Caco-2 (cell line): ENCODE measurements at regions of chrX and their contacts with region 1.

Region 1: DNA sequence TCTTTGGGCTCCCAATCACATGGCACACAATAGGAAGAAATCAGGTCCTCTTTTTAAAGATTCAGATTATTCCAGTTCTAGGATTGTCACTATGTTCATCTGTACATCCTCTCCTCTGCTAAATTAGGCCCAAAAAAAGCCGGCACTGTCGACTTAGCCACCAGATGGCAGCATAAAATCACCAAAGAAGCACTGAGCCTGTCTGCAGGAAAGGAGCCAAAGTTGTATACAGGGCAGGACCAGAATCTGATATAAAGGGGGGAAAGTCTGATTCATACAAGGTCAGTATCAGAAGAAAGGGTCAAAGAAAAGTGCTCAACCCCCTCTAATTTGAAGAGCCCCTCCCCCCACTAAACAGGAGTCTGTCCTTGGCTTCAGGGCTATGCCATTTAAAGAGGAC is 292.5 kb downstream of the CHIC1 start:
- DNase-seq: peak; percentile 43 to 64
- H3K4me3 ChIP-seq: no peak overlapping the region
- H3K4me3 Mint-ChIP-seq: no peak overlapping the region
- H3K27ac Mint-ChIP-seq: no peak overlapping the region
- H3K4me1 ChIP-seq: no peaks in the 10 kb centered on the region
- H3K4me1 Mint-ChIP-seq: no peaks in the 10 kb centered on the region
- H3K27me3 ChIP-seq: no peaks in the 10 kb centered on the region
- H3K27me3 Mint-ChIP-seq: no peaks in the 10 kb centered on the region
- CTCF ChIP-seq: peak; percentile 54 to 56

Region 2: DNA sequence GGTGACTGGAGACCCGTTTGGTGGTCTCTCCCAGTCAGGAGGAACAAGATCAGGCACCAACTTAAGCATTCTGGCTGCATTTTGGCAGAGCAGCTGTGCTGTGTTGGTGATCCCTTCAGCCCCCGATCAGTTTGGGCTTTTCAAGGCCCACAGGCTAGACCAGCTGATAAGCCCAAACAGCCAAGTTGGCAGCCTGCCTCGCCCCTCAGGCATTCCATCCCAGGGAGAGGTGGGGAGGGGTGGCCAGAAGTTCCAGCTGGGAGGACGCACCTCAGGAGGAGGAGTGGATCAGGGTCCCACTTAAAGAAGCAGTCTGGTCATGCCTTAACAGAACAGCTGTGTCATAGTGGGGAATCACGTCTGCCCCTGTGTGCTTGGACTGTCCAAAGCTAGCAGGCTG is 186.8 kb before region 1 on chrX:
- CTCF ChIA-PET with region 1: no interaction called
- POLR2A ChIA-PET with region 1: no interaction called
- intact Hi-C with region 1: no loop called
- DNase-seq: no peak
- H3K4me3 ChIP-seq: no peak overlapping the region
- H3K4me3 Mint-ChIP-seq: no peak overlapping the region
- H3K27ac Mint-ChIP-seq: no peak overlapping the region
- H3K4me1 ChIP-seq: no peaks in the 10 kb centered on the region
- H3K4me1 Mint-ChIP-seq: no peaks in the 10 kb centered on the region
- H3K27me3 ChIP-seq: no peaks in the 10 kb centered on the region
- H3K27me3 Mint-ChIP-seq: no peaks in the 10 kb centered on the region
- CTCF ChIP-seq: no peak

Region 3: GRCh38 chrX:73817393-73818199 is 38.0 kb before region 1 on chrX:
- CTCF ChIA-PET with region 1: no interaction called
- POLR2A ChIA-PET with region 1: no interaction called
- intact Hi-C with region 1: no loop called
- DNase-seq: no peak
- H3K4me3 ChIP-seq: no peak overlapping the region
- H3K4me3 Mint-ChIP-seq: no peak overlapping the region
- H3K27ac Mint-ChIP-seq: no peak overlapping the region
- H3K4me1 ChIP-seq: no peaks in the 10 kb centered on the region
- H3K4me1 Mint-ChIP-seq: no peaks in the 10 kb centered on the region
- H3K27me3 ChIP-seq: no peaks in the 10 kb centered on the region
- H3K27me3 Mint-ChIP-seq: no peaks in the 10 kb centered on the region
- CTCF ChIP-seq: no peak

Region 4: DNA sequence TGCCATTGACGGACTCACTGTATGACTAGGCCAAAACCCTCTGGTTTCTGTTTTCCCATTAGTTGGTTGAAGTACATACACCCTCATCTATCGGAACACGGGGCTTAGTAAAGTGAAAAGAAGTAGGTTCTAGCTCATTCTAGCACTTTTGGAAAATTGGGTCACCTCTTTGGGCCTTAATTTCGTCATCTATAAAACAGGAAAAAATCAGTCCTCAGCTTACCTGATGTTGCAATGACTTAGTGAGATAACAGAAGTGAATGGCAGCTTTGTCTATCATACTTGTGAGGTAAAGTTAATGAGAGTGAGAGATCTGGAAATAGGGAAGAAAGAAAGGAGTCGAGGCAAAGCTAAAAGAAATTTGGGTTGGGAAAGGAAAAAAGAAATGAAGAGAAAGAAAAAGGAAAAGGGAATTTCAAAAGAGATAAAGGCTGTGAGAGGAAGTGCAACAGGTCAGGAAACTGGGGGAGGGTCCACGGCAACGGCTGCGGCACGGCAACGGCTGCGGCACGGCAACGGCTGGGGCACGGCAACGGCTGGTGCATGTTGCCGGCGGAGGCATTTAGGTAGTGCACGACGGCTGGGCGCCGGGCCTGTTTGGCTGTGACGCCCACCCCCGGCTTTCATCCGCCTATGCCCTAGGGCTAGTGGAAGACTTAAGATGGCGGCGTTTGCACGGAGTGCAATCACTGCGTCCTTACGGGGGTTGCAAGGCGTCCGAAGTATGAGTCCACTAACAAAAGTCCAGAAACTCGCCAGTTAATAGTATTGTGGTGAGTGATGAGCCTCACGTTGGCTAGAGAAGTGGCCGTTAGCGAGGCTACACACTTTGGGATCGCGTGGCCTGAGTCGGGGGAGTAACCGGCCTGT is 88.4 kb after region 1 on chrX:
- CTCF ChIA-PET with region 1: no interaction called
- POLR2A ChIA-PET with region 1: no interaction called
- intact Hi-C with region 1: loop called (anchors 5 kb)
- DNase-seq: peak; percentile 83 to 89
- H3K4me3 ChIP-seq: peak overlapping the region; percentile 63
- H3K4me3 Mint-ChIP-seq: peak overlapping the region; percentile 86
- H3K27ac Mint-ChIP-seq: peak overlapping the region; percentile 97
- H3K4me1 ChIP-seq: 0 out of 2 replicates have a peak, but pooled peaks cover 4% of the 10 kb centered on the region
- H3K4me1 Mint-ChIP-seq: no peaks in the 10 kb centered on the region
- H3K27me3 ChIP-seq: no peaks in the 10 kb centered on the region
- H3K27me3 Mint-ChIP-seq: no peaks in the 10 kb centered on the region
- CTCF ChIP-seq: no peak

Region 5: DNA sequence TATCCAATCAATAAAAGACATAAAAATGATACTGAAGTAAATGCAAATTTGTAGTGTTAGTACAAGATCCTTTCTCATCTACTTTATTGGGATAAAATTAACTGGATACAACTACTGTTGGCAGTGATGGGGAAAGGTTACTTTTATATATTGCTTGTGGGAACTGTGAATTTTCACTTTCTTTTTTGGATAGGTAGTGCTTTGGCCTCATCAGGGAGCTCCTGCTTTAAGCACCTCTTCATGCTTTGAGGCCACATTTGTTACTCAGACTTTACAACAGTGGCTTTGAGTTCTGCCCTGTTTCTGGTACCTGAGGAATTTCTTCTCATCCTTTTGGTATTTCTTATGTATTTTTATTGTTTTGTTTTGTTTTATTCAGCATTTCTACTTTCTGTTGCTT is 131.6 kb after region 1 on chrX:
- CTCF ChIA-PET with region 1: no interaction called
- POLR2A ChIA-PET with region 1: no interaction called
- intact Hi-C with region 1: no loop called
- DNase-seq: no peak
- H3K4me3 ChIP-seq: no peak overlapping the region
- H3K4me3 Mint-ChIP-seq: no peak overlapping the region
- H3K27ac Mint-ChIP-seq: no peak overlapping the region
- H3K4me1 ChIP-seq: no peaks in the 10 kb centered on the region
- H3K4me1 Mint-ChIP-seq: no peaks in the 10 kb centered on the region
- H3K27me3 ChIP-seq: no peaks in the 10 kb centered on the region
- H3K27me3 Mint-ChIP-seq: no peaks in the 10 kb centered on the region
- CTCF ChIP-seq: no peak

Region 6: GRCh38 chrX:74015379-74016019 is 160.0 kb after region 1 on chrX:
- CTCF ChIA-PET with region 1: interaction called, 6 read pairs
- POLR2A ChIA-PET with region 1: no interaction called
- intact Hi-C with region 1: loop called (anchors 1 kb)
- DNase-seq: peak; percentile 48 to 52
- H3K4me3 ChIP-seq: no peak overlapping the region
- H3K4me3 Mint-ChIP-seq: no peak overlapping the region
- H3K27ac Mint-ChIP-seq: no peak overlapping the region
- H3K4me1 ChIP-seq: no peaks in the 10 kb centered on the region
- H3K4me1 Mint-ChIP-seq: peaks cover 4% of the 10 kb centered on the region
- H3K27me3 ChIP-seq: no peaks in the 10 kb centered on the region
- H3K27me3 Mint-ChIP-seq: no peaks in the 10 kb centered on the region
- CTCF ChIP-seq: peak; percentile 65 to 68